CD8-positive, alpha-beta T cell (primary cell): ENCODE measurements at regions of chr18 and their contacts with region 1.

Region 1: GRCh38 chr18:22408059-22408458 is 9.7 kb downstream of the CTAGE1 start:
- DNase-seq: peak in 2 of 9 experiments; percentile 48 to 68
- ATAC-seq: peak; percentile 55
- H3K4me3 ChIP-seq: no peak overlapping the region
- H3K4me3 Mint-ChIP-seq: no peak overlapping the region
- H3K27ac ChIP-seq: peak overlapping the region in 1 of 2 experiments; percentile 48
- H3K27ac Mint-ChIP-seq: peak overlapping the region; percentile 76
- H3K4me1 ChIP-seq: peaks cover 12% of the 10 kb centered on the region
- H3K4me1 Mint-ChIP-seq: peaks cover 29% of the 10 kb centered on the region
- H3K27me3 ChIP-seq: no peaks in the 10 kb centered on the region
- H3K27me3 Mint-ChIP-seq: peaks cover 5% of the 10 kb centered on the region
- CTCF ChIP-seq: no peak

Region 2: DNA sequence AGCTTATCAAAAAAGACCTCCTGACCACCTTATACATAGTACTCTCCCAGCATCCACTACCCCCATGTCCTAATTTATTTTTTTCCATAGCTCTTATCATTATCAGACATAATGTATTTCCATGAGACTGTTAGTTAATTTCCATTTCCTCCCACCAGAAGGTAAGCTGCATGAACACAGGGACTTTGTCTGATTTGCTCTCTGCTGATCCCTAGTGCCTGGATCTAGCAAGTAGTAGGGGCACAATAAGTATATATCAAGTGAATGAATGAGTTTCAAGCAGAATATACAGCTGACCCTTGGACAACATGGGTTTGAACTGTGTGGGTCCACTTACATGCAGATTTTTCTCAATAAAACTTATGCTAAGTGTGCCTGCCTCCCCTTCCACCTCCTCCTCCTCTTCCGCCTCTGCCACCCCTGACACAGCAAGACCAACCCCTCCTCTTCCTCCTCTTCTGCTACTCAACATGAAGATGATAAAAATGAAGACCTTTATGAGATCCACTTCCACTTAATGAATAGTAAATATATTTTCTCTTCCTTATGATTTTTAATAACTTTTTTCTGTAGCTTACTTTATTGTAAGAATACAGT is 44.1 kb before region 1 on chr18:
- CTCF ChIA-PET with region 1: no interaction called
- POLR2A ChIA-PET with region 1: no interaction called
- intact Hi-C with region 1: no loop called
- DNase-seq: peak in 2 of 9 experiments; percentile 57 to 71
- ATAC-seq: peak; percentile 61
- H3K4me3 ChIP-seq: no peak overlapping the region
- H3K4me3 Mint-ChIP-seq: no peak overlapping the region
- H3K27ac ChIP-seq: no peak overlapping the region
- H3K27ac Mint-ChIP-seq: no peak overlapping the region
- H3K4me1 ChIP-seq: no peaks in the 10 kb centered on the region
- H3K4me1 Mint-ChIP-seq: peaks cover 4% of the 10 kb centered on the region
- H3K27me3 ChIP-seq: no peaks in the 10 kb centered on the region
- H3K27me3 Mint-ChIP-seq: no peaks in the 10 kb centered on the region
- CTCF ChIP-seq: peak; percentile 26

Region 3: GRCh38 chr18:23982155-23983079 is 1574.4 kb after region 1 on chr18:
- CTCF ChIA-PET with region 1: no interaction called
- POLR2A ChIA-PET with region 1: no interaction called
- intact Hi-C with region 1: loop called in 1 of 2 experiments (anchors 10 kb)
- DNase-seq: no peak
- ATAC-seq: no peak
- H3K4me3 ChIP-seq: no peak overlapping the region
- H3K4me3 Mint-ChIP-seq: no peak overlapping the region
- H3K27ac ChIP-seq: no peak overlapping the region
- H3K27ac Mint-ChIP-seq: no peak overlapping the region
- H3K4me1 ChIP-seq: peaks cover 12% of the 10 kb centered on the region
- H3K4me1 Mint-ChIP-seq: peaks cover 37% of the 10 kb centered on the region
- H3K27me3 ChIP-seq: no peaks in the 10 kb centered on the region
- H3K27me3 Mint-ChIP-seq: no peaks in the 10 kb centered on the region
- CTCF ChIP-seq: no peak